ENCODE measurements at regions of chr22 and their contacts with region 1.

Region 1: DNA sequence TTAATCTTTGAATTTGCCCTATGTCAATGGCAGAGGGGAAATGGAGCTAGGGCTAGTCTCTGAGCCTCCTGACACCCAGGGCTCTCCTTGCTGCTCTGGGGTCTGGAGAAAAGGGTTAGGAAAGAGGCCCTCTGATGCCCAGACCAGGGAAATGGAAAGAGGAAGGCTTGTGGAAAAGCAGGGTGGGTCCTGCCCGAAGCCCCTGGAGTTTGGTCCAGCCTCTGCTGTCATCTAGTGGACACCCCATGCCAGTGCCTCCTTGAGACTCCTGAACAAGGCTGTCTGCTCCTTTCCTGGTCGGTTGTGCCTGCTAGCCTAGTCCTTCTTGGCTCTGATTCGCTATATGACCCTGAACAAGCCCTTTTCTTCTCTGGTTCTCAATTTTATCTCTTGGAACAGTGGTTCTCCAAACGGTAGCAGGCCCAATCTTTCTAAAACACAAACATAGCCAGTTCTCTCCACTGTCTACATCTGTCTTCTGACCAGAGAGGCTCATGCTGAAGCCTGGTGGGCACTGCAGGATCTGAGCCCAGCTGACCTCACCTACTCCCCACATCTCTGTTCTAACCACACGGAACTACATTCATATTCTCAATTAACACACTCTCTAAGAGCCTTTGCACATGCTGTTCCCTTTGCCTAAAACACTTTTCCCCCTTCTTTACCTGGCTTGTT is 8.8 kb upstream of the PLA2G3 start:
- DNase-seq: peak; percentile 71 to 80
- H3K4me3 ChIP-seq: no peak overlapping the region
- H3K27ac ChIP-seq: no peak overlapping the region
- H3K4me1 ChIP-seq: no peaks in the 10 kb centered on the region; a peak in 1 of 7 replicates
- H3K27me3 ChIP-seq: no peaks in the 10 kb centered on the region
- CTCF ChIP-seq: peak; percentile 94 to 100 (median 97)
- EP300 ChIP-seq: no peak
- POLR2A ChIP-seq: no peak
- RAD21 ChIP-seq: peak; percentile 99 to 100

Region 2: DNA sequence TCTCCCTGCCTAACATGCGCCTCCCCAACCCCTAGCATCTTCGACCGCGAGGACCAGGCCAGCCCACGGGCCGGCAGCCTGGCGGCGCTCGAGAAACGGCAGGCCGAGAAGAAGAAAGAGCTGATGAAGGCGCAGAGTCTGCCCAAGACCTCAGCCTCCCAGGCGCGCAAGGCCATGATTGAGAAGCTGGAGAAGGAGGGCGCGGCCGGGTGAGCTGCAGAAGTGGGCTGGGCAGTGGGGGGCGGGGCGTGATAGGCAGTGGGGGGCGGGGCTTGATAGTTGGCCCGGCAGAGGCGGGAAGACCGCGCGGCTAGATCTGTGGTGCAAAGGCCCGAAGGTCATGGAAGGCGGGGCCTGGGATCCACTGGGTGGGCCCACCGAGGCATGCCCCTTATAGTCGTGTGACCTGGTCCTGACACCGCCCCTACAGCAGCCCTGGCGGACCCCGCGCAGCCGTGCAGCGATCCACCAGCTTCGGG is 50.4 kb before region 1 on chr22:
- CTCF ChIA-PET with region 1: interaction called, 124 read pairs
- POLR2A ChIA-PET with region 1: interaction called, 4 read pairs
- DNase-seq: peak in 1 of 2 experiments; percentile 88
- H3K4me3 ChIP-seq: peak overlapping the region; percentile 8 to 50 (median 18); a peak in 5 of 8 replicates
- H3K27ac ChIP-seq: no peak overlapping the region
- H3K4me1 ChIP-seq: peaks cover 5 to 15% (median 11%) of the 10 kb centered on the region in 4 experiments
- H3K27me3 ChIP-seq: no peaks in the 10 kb centered on the region
- CTCF ChIP-seq: peak in 1 of 3 experiments; percentile 15; a peak in 1 of 4 replicates
- EP300 ChIP-seq: no peak
- POLR2A ChIP-seq: no peak
- RAD21 ChIP-seq: peak in 1 of 2 experiments; percentile 19; a peak in 1 of 4 replicates

Region 3: GRCh38 chr22:31160328-31160978 is 11.4 kb after region 1 on chr22:
- CTCF ChIA-PET with region 1: interaction called, 11 read pairs
- POLR2A ChIA-PET with region 1: interaction called, 3 read pairs
- DNase-seq: peak in 1 of 2 experiments; percentile 63
- H3K4me3 ChIP-seq: peak overlapping the region; percentile 71 to 87 (median 74)
- H3K27ac ChIP-seq: 0 out of 2 replicates have a peak overlapping the region, but pooled peaks have one; percentile 23
- H3K4me1 ChIP-seq: peaks cover 0 to 8% (median 1%) of the 10 kb centered on the region in 4 experiments; a peak in 2 of 7 replicates
- H3K27me3 ChIP-seq: peaks cover 0 to 25% (median 7%) of the 10 kb centered on the region in 4 experiments; a peak in 6 of 7 replicates
- CTCF ChIP-seq: no peak
- EP300 ChIP-seq: no peak
- POLR2A ChIP-seq: no peak
- RAD21 ChIP-seq: no peak

Region 4: GRCh38 chr22:31173386-31174145 is 24.5 kb after region 1 on chr22:
- CTCF ChIA-PET with region 1: no interaction called
- POLR2A ChIA-PET with region 1: no interaction called
- DNase-seq: no peak
- H3K4me3 ChIP-seq: no peak overlapping the region
- H3K27ac ChIP-seq: no peak overlapping the region
- H3K4me1 ChIP-seq: no peaks in the 10 kb centered on the region
- H3K27me3 ChIP-seq: no peaks in the 10 kb centered on the region
- CTCF ChIP-seq: no peak
- EP300 ChIP-seq: no peak
- POLR2A ChIP-seq: no peak
- RAD21 ChIP-seq: no peak

Region 5: GRCh38 chr22:31425331-31426050 is 276.4 kb after region 1 on chr22:
- CTCF ChIA-PET with region 1: no interaction called
- POLR2A ChIA-PET with region 1: no interaction called
- DNase-seq: no peak
- H3K4me3 ChIP-seq: no peak overlapping the region
- H3K27ac ChIP-seq: no peak overlapping the region
- H3K4me1 ChIP-seq: no peaks in the 10 kb centered on the region
- H3K27me3 ChIP-seq: no peaks in the 10 kb centered on the region
- CTCF ChIP-seq: no peak
- EP300 ChIP-seq: no peak
- POLR2A ChIP-seq: no peak
- RAD21 ChIP-seq: no peak